Left ventricle myocardium inferior (tissue), 1 donor: ENCODE measurements at regions of chr2 and their contacts with region 1.

Region 1: DNA sequence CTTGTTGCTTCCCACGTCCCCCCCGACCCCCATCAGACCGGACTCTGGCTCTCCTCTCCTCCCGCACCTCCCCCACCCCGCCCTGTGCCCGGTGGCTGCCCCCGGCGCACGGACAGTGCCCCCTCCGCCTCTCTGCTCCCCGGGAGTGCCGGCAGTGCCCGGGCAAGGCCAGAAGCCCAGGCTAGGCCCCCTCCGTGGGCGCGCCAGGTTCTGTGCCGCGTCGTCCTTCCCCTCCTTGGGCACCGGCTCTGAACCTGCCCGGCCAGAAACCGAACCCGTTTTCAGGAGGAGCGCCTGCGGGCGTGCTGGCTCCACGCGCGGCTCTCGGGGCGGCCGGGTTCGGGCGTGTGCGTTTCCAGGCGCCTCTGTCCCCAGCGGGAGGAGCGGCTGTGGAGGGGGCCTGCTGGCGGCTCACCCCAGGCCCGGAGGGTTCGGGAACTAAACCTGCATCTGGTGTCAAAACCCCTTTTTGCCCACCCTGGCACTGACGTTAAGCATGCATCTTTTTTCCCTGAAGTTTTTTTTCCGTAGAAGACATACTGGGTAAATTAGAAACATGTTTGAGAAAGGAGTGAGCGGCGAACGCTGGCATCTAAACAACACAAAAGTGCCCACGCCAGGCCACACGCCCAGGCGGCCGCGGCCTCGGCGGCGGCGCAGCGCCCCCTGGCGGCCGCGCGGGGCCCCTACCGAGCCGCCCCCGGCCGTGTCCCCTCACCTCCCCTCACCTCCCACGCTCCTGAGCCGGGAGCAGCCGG is 123.9 kb upstream of the SLC1A4 start:
- DNase-seq: peak; percentile 61
- H3K4me3 ChIP-seq: peak overlapping the region; percentile 76
- H3K27ac ChIP-seq: peak overlapping the region; percentile 84
- H3K4me1 ChIP-seq: peaks cover 24% of the 10 kb centered on the region
- H3K27me3 ChIP-seq: peaks cover 6% of the 10 kb centered on the region
- CTCF ChIP-seq: peak; percentile 93

Region 2: GRCh38 chr2:64523666-64524603 is 341.3 kb before region 1 on chr2 and contains the start of gene AFTPH:
- intact Hi-C with region 1: loop called (anchors 10 kb)
- DNase-seq: peak; percentile 98
- H3K4me3 ChIP-seq: peak within 1 kb of the TSS; percentile 98
- H3K27ac ChIP-seq: peak within 1 kb of the TSS; percentile 97
- H3K4me1 ChIP-seq: peaks cover 57% of the 10 kb centered on the region
- H3K27me3 ChIP-seq: no peaks in the 10 kb centered on the region
- CTCF ChIP-seq: no peak
- total RNA-seq, gene AFTPH: 11.3 TPM

Region 3: DNA sequence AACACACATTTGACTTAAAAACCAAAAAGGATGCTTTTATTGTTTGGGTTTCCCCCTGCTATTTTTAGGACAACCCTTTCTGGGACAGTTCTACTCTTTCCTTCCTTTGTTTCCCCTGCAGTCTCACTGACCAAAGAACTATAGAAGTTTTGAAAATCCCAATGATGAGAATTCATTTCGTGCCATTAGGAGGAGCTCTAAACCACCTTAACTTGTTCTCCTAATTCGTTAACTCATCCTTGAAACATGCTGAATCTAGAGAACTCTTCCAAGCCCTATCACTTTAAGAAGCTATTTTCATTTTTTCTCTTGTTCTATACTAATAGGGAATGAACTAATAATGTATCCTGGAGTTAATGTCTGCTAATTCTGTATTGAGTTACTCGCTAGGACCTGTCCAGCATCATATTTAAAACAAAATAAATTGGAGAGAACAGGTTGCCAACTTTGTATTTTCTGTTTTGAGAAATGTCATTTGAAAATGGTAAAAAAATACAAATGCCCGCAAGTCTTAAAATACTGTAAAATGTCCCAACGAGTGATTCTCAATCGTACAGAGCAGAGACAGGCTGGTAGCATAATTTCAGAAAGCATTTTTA is 278.3 kb before region 1 on chr2:
- intact Hi-C with region 1: loop called (anchors 5 kb)
- DNase-seq: no peak
- H3K4me3 ChIP-seq: no peak overlapping the region
- H3K27ac ChIP-seq: no peak overlapping the region
- H3K4me1 ChIP-seq: peaks cover 8% of the 10 kb centered on the region
- H3K27me3 ChIP-seq: no peaks in the 10 kb centered on the region
- CTCF ChIP-seq: peak; percentile 75

Region 4: GRCh38 chr2:64730551-64731262 is 134.5 kb before region 1 on chr2:
- intact Hi-C with region 1: loop called (anchors 10 kb)
- DNase-seq: peak; percentile 38
- H3K4me3 ChIP-seq: peak overlapping the region; percentile 56
- H3K27ac ChIP-seq: peak overlapping the region; percentile 83
- H3K4me1 ChIP-seq: peaks cover 36% of the 10 kb centered on the region
- H3K27me3 ChIP-seq: no peaks in the 10 kb centered on the region
- CTCF ChIP-seq: no peak